Colonic mucosa (tissue), 4 donors: ENCODE measurements at regions of chr5 and their contacts with region 1.

Region 1: GRCh38 chr5:180084688-180085561 is 13.4 kb upstream of the RNF130 start:
- DNase-seq: peak; percentile 86
- H3K4me3 ChIP-seq: no peak overlapping the region
- H3K27ac ChIP-seq: peak overlapping the region; percentile 6
- H3K4me1 ChIP-seq: no peaks in the 10 kb centered on the region
- H3K27me3 ChIP-seq: no peaks in the 10 kb centered on the region
- CTCF ChIP-seq: no peak

Region 2: GRCh38 chr5:179919487-179920060 is 165.4 kb before region 1 on chr5:
- intact Hi-C with region 1: loop called (anchors 5 kb)
- DNase-seq: no peak
- H3K4me3 ChIP-seq: no peak overlapping the region
- H3K27ac ChIP-seq: no peak overlapping the region
- H3K4me1 ChIP-seq: no peaks in the 10 kb centered on the region
- H3K27me3 ChIP-seq: no peaks in the 10 kb centered on the region
- CTCF ChIP-seq: no peak